Activated naive CD8-positive, alpha-beta T cell treated with anti-CD3 and anti-CD28 coated beads, Interleukin-2, amount 10 ng/mL, durations not matched to agents 7 days and 5 days (primary cell): ENCODE measurements at regions of chr2 and their contacts with region 1.

Region 1: DNA sequence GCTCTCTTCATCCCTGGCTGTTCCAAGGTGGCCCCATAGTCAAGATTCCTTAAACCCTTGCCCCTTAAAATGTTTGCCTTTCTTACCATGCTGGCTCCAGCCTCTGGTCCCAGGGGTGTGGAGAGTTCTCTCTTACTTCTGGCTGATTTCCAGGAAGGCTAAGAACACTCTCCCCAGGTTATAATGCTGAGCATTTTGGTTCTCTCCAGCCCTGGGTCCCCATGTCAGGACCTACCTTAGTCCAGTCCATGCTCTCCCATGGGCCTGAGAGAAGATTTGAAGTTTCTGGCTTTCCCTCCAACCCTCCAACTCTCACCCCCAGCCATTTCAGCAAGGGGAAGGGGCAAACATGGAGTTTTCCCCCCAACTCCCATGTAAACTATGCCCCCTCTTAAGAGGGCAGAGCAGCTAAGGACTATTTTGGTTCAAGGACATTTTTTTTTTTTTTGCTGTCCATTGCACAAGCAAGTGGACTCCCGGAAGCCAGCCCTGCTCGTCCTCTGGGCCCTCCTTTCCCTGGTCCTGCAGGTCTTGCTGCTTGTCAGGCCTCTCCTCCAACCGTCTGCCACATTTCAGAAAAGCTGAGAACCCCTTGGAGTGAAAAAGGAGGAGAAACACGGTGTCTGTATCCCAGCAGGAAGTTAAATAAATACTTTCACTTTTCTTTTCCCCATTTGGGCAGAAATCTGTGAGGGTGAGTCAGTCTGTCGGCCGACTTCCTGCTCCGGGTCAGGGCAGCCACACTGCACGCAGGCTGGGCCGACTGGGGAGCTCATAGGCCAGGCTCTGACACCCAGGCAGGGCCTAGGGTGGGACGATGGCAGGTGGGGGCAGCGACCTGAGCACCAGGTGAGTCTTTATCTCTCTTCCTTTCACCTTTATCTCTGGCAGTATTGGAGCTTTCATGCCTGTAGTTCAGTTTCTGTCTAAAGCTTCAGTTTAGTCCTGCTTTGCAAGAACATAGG is at the start of gene SP140L:
- DNase-seq: peak; percentile 85
- ATAC-seq: peak; percentile 99
- H3K4me3 Mint-ChIP-seq: peak within 1 kb of the TSS; percentile 97
- H3K27ac Mint-ChIP-seq: peak within 1 kb of the TSS; percentile 98
- H3K4me1 Mint-ChIP-seq: peaks cover 48% of the 10 kb centered on the region
- H3K27me3 Mint-ChIP-seq: no peaks in the 10 kb centered on the region
- total RNA-seq, gene SP140L: 107 to 115 TPM

Region 2: GRCh38 chr2:230347659-230348305 is 21.0 kb after region 1 on chr2:
- POLR2A ChIA-PET with region 1: interaction called, 23 read pairs
- DNase-seq: no peak
- ATAC-seq: peak; percentile 69
- H3K4me3 Mint-ChIP-seq: peak overlapping the region; percentile 73
- H3K27ac Mint-ChIP-seq: peak overlapping the region; percentile 92
- H3K4me1 Mint-ChIP-seq: peaks cover 59% of the 10 kb centered on the region
- H3K27me3 Mint-ChIP-seq: no peaks in the 10 kb centered on the region

Region 3: GRCh38 chr2:230411570-230412370 is 85.0 kb after region 1 on chr2:
- POLR2A ChIA-PET with region 1: interaction called, 32 read pairs
- DNase-seq: peak; percentile 82
- ATAC-seq: peak; percentile 69
- H3K4me3 Mint-ChIP-seq: peak overlapping the region; percentile 98
- H3K27ac Mint-ChIP-seq: peak overlapping the region; percentile 100
- H3K4me1 Mint-ChIP-seq: peaks cover 62% of the 10 kb centered on the region
- H3K27me3 Mint-ChIP-seq: no peaks in the 10 kb centered on the region